A673 (cell line): ENCODE measurements at regions of chr5 and their contacts with region 1.

Region 1: GRCh38 chr5:64207978-64208377 is 42.3 kb downstream of the RNF180 start:
- DNase-seq: peak; percentile 30
- H3K4me3 ChIP-seq: no peak overlapping the region
- H3K27ac ChIP-seq: no peak overlapping the region
- H3K4me1 ChIP-seq: no peaks in the 10 kb centered on the region
- H3K27me3 ChIP-seq: no peaks in the 10 kb centered on the region
- CTCF ChIP-seq: peak; percentile 34; the same call in 1 of the 2 replicates

Region 2: GRCh38 chr5:63401436-63402046 is 806.4 kb before region 1 on chr5:
- CTCF ChIA-PET with region 1: no interaction called
- POLR2A ChIA-PET with region 1: no interaction called
- intact Hi-C with region 1: loop called (anchors 5 kb)
- DNase-seq: peak; percentile 68
- H3K4me3 ChIP-seq: no peak overlapping the region
- H3K27ac ChIP-seq: no peak overlapping the region
- H3K4me1 ChIP-seq: no peaks in the 10 kb centered on the region
- H3K27me3 ChIP-seq: peaks cover 19% of the 10 kb centered on the region
- CTCF ChIP-seq: peak; percentile 90

Region 3: GRCh38 chr5:63854076-63854475 is 353.9 kb before region 1 on chr5:
- CTCF ChIA-PET with region 1: no interaction called
- POLR2A ChIA-PET with region 1: no interaction called
- intact Hi-C with region 1: no loop called
- DNase-seq: no peak
- H3K4me3 ChIP-seq: no peak overlapping the region
- H3K27ac ChIP-seq: no peak overlapping the region
- H3K4me1 ChIP-seq: no peaks in the 10 kb centered on the region
- H3K27me3 ChIP-seq: no peaks in the 10 kb centered on the region
- CTCF ChIP-seq: no peak

Region 4: DNA sequence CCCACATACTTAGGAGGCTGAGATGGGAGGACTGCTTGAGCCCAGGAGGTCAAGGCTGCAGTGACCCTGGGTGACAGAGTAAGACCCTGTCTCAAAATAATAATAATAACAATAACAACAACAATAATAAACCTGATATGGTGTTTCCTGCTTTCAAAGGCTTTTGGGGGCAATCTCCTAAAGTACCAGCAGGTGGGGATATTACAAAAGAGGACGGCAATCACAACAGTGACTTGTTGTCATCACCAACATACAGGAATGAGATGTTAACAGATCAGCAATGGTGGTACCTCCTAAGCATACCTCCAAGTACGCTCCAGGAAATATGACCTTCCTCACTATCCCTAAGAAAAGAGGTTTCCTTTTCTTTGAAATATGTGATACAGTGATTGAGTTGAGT is 133.4 kb before region 1 on chr5:
- CTCF ChIA-PET with region 1: no interaction called
- POLR2A ChIA-PET with region 1: no interaction called
- intact Hi-C with region 1: loop called (anchors 2 kb)
- DNase-seq: peak; percentile 57
- H3K4me3 ChIP-seq: no peak overlapping the region
- H3K27ac ChIP-seq: no peak overlapping the region
- H3K4me1 ChIP-seq: no peaks in the 10 kb centered on the region
- H3K27me3 ChIP-seq: peaks cover 4% of the 10 kb centered on the region
- CTCF ChIP-seq: peak; percentile 65

Region 5: GRCh38 chr5:64147849-64148441 is 60.0 kb before region 1 on chr5:
- CTCF ChIA-PET with region 1: no interaction called
- POLR2A ChIA-PET with region 1: no interaction called
- intact Hi-C with region 1: loop called (anchors 2 kb)
- DNase-seq: peak; percentile 73
- H3K4me3 ChIP-seq: no peak overlapping the region
- H3K27ac ChIP-seq: no peak overlapping the region
- H3K4me1 ChIP-seq: no peaks in the 10 kb centered on the region
- H3K27me3 ChIP-seq: no peaks in the 10 kb centered on the region
- CTCF ChIP-seq: peak; percentile 75